Tibial artery (tissue), 4 donors: ENCODE measurements at regions of chr15 and their contacts with region 1.

Region 1: GRCh38 chr15:51917493-51917892 is 54.1 kb downstream of the LEO1 start:
- DNase-seq: no peak
- H3K4me3 ChIP-seq: no peak overlapping the region
- H3K27ac ChIP-seq: no peak overlapping the region
- H3K4me1 ChIP-seq: no peaks in the 10 kb centered on the region
- H3K27me3 ChIP-seq: no peaks in the 10 kb centered on the region
- CTCF ChIP-seq: no peak

Region 2: DNA sequence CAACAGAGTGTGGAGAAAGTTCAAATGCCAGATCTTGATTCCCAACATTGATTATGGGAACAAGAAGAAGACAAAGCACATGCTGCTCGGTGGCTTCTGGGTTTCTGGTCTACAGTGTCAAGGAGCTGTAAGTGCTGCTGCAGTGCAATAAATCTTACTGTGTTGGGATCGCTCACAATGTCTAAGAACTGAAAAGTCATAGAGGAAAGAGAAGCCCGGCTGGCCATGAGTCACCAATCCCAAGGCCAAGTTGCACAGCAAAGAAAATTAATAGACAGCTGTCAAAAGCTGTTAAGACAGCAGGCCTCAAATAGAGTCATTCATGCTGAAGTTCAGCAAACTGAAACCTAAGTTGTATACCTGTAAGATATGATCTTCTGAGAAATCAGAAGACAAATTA is 1118.8 kb before region 1 on chr15:
- intact Hi-C with region 1: loop called (anchors 5 kb)
- DNase-seq: no peak
- H3K4me3 ChIP-seq: no peak overlapping the region
- H3K27ac ChIP-seq: no peak overlapping the region
- H3K4me1 ChIP-seq: no peaks in the 10 kb centered on the region
- H3K27me3 ChIP-seq: no peaks in the 10 kb centered on the region
- CTCF ChIP-seq: no peak